ENCODE measurements at regions of chr12 and their contacts with region 1.

Region 1: GRCh38 chr12:122225683-122226407 is at the start of gene DIABLO:
- DNase-seq: peak; percentile 93 to 100 (median 100)
- ATAC-seq: peak; percentile 91
- H3K4me3 Mint-ChIP-seq: peak within 1 kb of the TSS; percentile 84 to 93 (median 90)
- H3K27ac Mint-ChIP-seq: peak within 1 kb of the TSS; percentile 79 to 97 (median 94)
- H3K4me1 Mint-ChIP-seq: peaks cover 22 to 58% (median 43%) of the 10 kb centered on the region in 4 donors
- H3K27me3 Mint-ChIP-seq: no peaks in the 10 kb centered on the region
- polyA plus RNA-seq, gene DIABLO: 48.2 to 71.3 (median 61.7) TPM

Region 2: GRCh38 chr12:122190842-122191668 is 34.8 kb before region 1 on chr12:
- POLR2A ChIA-PET with region 1: no interaction called
- DNase-seq: peak; percentile 36 to 82 (median 65)
- ATAC-seq: peak; percentile 85 to 89
- H3K4me3 Mint-ChIP-seq: no peak overlapping the region
- H3K27ac Mint-ChIP-seq: no peak overlapping the region
- H3K4me1 Mint-ChIP-seq: peaks cover 2 to 7% (median 4%) of the 10 kb centered on the region in 4 donors
- H3K27me3 Mint-ChIP-seq: peaks cover 0 to 4% (median 0%) of the 10 kb centered on the region in 5 donors

Region 3: GRCh38 chr12:122205063-122205925 is 20.6 kb before region 1 on chr12:
- POLR2A ChIA-PET with region 1: interaction called, 16 read pairs
- DNase-seq: no peak
- ATAC-seq: no peak
- H3K4me3 Mint-ChIP-seq: peak overlapping the region; percentile 61 to 90 (median 80)
- H3K27ac Mint-ChIP-seq: peak overlapping the region in 7 of 10 donors; percentile 38 to 88 (median 81)
- H3K4me1 Mint-ChIP-seq: peaks cover 9 to 17% (median 12%) of the 10 kb centered on the region in 4 donors
- H3K27me3 Mint-ChIP-seq: peaks cover 0 to 11% (median 0%) of the 10 kb centered on the region in 5 donors

Region 4: GRCh38 chr12:122244565-122245371 is 18.9 kb after region 1 on chr12:
- POLR2A ChIA-PET with region 1: interaction called, 16 read pairs
- DNase-seq: peak in 3 of 10 donors; percentile 23 to 37 (median 29)
- ATAC-seq: peak; percentile 52 to 75
- H3K4me3 Mint-ChIP-seq: peak overlapping the region; percentile 51 to 85 (median 69)
- H3K27ac Mint-ChIP-seq: peak overlapping the region; percentile 44 to 92 (median 72)
- H3K4me1 Mint-ChIP-seq: peaks cover 7 to 26% (median 17%) of the 10 kb centered on the region in 4 donors
- H3K27me3 Mint-ChIP-seq: no peaks in the 10 kb centered on the region

Region 5: GRCh38 chr12:122265931-122266771 is 40.3 kb after region 1 on chr12 and contains the start of gene VPS33A:
- POLR2A ChIA-PET with region 1: interaction called, 23 read pairs
- DNase-seq: peak; percentile 87 to 97 (median 90)
- ATAC-seq: peak; percentile 80 to 83
- H3K4me3 Mint-ChIP-seq: peak within 1 kb of the TSS; percentile 96 to 99 (median 98)
- H3K27ac Mint-ChIP-seq: peak within 1 kb of the TSS; percentile 98 to 100 (median 99)
- H3K4me1 Mint-ChIP-seq: peaks cover 10 to 32% (median 26%) of the 10 kb centered on the region in 4 donors
- H3K27me3 Mint-ChIP-seq: peaks cover 0 to 3% (median 0%) of the 10 kb centered on the region in 5 donors
- polyA plus RNA-seq, gene VPS33A: 17.6 to 24.2 (median 20.1) TPM